ENCODE measurements at regions of chr12 and their contacts with region 1.

Region 1: GRCh38 chr12:54126029-54126695 is 62.6 kb downstream of the SMUG1 start:
- H3K4me3 ChIP-seq: peak overlapping the region; percentile 75
- H3K27ac ChIP-seq: peak overlapping the region; percentile 99
- H3K4me1 ChIP-seq: peaks cover 25% of the 10 kb centered on the region
- CTCF ChIP-seq: peak; percentile 54

Region 2: GRCh38 chr12:54173066-54173726 is 47.0 kb after region 1 on chr12:
- CTCF ChIA-PET with region 1: no interaction called
- POLR2A ChIA-PET with region 1: interaction called, 10 read pairs
- H3K4me3 ChIP-seq: peak overlapping the region; percentile 23
- H3K27ac ChIP-seq: peak overlapping the region; percentile 40; the same call in 1 of the 2 replicates
- H3K4me1 ChIP-seq: peaks cover 12% of the 10 kb centered on the region; the same call in 1 of the 2 replicates
- CTCF ChIP-seq: no peak

Measured in HEK293 (cell line).